ENCODE measurements at regions of chr1 and their contacts with region 1.

Region 1: DNA sequence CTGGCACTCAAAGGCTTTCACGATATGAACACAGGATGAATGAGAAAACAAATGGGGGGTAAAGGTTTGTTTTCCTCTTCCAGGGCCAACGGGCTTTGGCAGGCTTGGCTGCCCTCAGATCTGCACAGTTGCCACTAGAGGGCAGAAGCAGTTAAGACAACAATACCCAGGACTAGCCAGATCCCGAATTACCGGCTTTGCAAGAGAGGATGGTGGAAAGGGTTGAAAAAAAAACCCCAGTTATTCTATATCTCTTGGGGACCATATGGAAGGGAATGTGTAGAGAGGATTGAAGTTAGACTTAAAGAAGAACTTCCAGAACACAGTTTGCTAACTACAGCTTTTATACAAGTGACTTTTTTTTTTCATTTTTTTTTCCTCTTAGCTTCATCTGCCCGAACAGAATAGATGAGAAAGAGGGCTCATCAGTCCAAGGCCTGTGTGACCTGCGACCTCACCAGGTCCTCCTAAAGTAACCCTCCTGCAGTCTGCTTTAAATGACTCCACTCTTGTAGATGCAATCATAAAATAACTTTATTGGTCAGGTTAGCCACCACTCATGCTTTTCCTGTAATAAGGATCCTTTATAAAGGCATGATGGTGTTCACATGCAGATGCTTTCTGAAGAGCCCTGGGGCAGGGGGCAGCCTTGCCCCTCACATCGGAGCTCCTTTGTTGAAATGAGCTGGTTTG is 10.7 kb downstream of the FMOD start:
- DNase-seq: peak; percentile 71
- ATAC-seq: peak; percentile 81
- H3K4me3 Mint-ChIP-seq: no peak overlapping the region
- H3K27ac Mint-ChIP-seq: no peak overlapping the region
- H3K4me1 Mint-ChIP-seq: peaks cover 17% of the 10 kb centered on the region
- H3K27me3 Mint-ChIP-seq: peaks cover 11% of the 10 kb centered on the region
- CTCF ChIP-seq: peak; percentile 91

Region 2: GRCh38 chr1:203239526-203240305 is 100.5 kb before region 1 on chr1:
- CTCF ChIA-PET with region 1: no interaction called
- POLR2A ChIA-PET with region 1: no interaction called
- intact Hi-C with region 1: no loop called
- DNase-seq: no peak
- ATAC-seq: no peak
- H3K4me3 Mint-ChIP-seq: no peak overlapping the region
- H3K27ac Mint-ChIP-seq: no peak overlapping the region
- H3K4me1 Mint-ChIP-seq: no peaks in the 10 kb centered on the region
- H3K27me3 Mint-ChIP-seq: peaks cover 20% of the 10 kb centered on the region
- CTCF ChIP-seq: no peak

Region 3: GRCh38 chr1:203290261-203291089 is 49.8 kb before region 1 on chr1:
- CTCF ChIA-PET with region 1: interaction called, 15 read pairs
- POLR2A ChIA-PET with region 1: no interaction called
- intact Hi-C with region 1: no loop called
- DNase-seq: peak; percentile 99
- ATAC-seq: peak; percentile 55
- H3K4me3 Mint-ChIP-seq: peak overlapping the region; percentile 83
- H3K27ac Mint-ChIP-seq: peak overlapping the region; percentile 100
- H3K4me1 Mint-ChIP-seq: peaks cover 79% of the 10 kb centered on the region
- H3K27me3 Mint-ChIP-seq: peaks cover 1% of the 10 kb centered on the region
- CTCF ChIP-seq: no peak

Region 4: DNA sequence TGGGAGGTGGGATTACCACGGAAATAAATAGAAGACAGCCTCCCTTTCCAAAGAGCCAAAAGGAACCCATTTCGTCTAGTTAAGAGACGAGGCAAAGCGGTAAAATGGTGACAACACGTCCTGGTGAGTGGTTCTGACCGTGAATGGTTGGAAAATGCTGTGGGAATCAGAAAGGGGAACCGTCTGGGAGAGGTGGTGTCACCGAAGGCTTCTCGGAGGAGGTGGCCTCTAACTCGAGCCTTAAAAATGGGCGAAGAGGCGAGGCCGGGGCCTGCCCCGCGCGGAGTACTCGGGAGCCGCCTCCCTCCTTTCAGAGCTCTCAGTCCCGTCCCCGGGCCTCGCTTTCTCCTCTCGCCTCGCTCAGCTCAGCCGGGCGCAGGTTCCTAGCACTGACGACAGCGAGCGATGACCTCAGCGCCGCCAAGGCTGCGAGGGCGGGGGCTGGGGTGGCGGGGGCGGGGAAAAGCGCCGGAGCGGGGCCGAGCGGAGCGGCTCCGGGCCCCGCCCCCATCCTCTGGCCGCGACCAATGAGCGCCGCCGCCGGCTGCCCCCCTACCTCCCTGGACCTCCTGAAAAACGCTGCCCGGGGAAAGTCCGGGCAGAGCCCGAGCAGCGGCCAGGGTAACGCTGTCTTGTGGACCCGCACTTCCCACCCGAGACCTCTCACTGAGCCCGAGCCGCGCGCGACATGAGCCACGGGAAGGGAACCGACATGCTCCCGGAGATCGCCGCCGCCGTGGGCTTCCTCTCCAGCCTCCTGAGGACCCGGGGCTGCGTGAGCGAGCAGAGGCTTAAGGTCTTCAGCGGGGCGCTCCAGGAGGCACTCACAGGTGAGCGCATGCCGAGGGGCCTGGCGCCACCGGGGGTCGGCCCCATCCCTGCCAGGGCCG is 35.1 kb before region 1 on chr1 and contains the start of gene BTG2:
- CTCF ChIA-PET with region 1: interaction called, 148 read pairs
- POLR2A ChIA-PET with region 1: interaction called, 28 read pairs
- intact Hi-C with region 1: no loop called
- DNase-seq: peak; percentile 93
- ATAC-seq: peak; percentile 85
- H3K4me3 Mint-ChIP-seq: peak within 1 kb of the TSS; percentile 99
- H3K27ac Mint-ChIP-seq: peak within 1 kb of the TSS; percentile 98
- H3K4me1 Mint-ChIP-seq: peaks cover 55% of the 10 kb centered on the region
- H3K27me3 Mint-ChIP-seq: no peaks in the 10 kb centered on the region
- CTCF ChIP-seq: no peak
- total RNA-seq, gene BTG2: 115 TPM

Region 5: DNA sequence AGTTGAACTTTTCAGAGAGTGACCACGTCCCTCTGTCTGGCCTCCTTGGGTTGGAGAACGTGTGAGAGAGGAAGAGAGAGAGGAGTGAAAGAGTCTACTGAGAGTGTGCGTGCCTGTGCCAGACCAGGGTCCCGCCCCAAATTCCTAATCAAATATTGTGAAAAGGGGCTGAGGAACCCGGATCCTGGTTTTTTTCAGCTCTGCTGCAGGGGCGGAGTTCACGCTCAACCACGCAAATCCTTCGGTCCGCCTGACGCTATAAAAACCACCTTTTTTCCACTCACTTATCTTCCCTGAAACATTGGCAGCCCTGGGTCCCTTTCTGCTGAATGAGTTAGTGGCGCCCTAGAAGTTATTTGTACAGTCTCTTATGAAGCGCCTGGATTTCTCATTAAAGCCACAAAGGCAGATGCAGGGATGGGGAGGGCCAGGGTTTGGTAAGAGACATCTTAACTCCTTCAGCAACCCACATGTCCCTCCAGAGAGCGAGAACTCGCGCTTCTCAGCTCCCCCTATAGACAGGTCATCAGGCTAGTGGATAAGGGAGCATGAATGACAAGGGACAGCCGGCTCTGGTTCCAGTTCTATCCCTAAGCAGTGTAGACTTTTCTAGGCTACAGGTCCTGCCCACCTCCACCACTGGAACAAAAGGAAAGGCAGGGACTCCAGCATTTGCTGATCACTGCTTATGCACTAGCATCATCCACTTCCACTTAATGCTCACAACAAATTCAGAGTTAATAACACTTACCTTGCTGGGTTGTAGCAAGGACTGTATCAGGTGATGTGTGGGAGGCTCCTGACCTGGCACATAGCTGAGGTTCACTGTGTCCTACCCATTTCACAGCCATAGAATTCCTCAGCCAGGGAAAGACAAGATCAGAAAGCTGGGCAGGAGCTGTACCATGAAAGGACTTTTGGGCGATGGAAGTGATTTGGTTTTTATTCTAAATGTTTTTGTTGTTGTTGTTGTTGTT is 11.1 kb after region 1 on chr1 and contains the start of gene FMOD:
- CTCF ChIA-PET with region 1: interaction called, 161 read pairs
- POLR2A ChIA-PET with region 1: no interaction called
- intact Hi-C with region 1: no loop called
- DNase-seq: peak; percentile 32
- ATAC-seq: peak; percentile 72
- H3K4me3 Mint-ChIP-seq: peak within 1 kb of the TSS; percentile 29
- H3K27ac Mint-ChIP-seq: peak within 1 kb of the TSS; percentile 50
- H3K4me1 Mint-ChIP-seq: peaks cover 10% of the 10 kb centered on the region
- H3K27me3 Mint-ChIP-seq: peaks cover 18% of the 10 kb centered on the region
- CTCF ChIP-seq: no peak
- total RNA-seq, gene FMOD: 1.4 to 2.4 TPM

Region 6: DNA sequence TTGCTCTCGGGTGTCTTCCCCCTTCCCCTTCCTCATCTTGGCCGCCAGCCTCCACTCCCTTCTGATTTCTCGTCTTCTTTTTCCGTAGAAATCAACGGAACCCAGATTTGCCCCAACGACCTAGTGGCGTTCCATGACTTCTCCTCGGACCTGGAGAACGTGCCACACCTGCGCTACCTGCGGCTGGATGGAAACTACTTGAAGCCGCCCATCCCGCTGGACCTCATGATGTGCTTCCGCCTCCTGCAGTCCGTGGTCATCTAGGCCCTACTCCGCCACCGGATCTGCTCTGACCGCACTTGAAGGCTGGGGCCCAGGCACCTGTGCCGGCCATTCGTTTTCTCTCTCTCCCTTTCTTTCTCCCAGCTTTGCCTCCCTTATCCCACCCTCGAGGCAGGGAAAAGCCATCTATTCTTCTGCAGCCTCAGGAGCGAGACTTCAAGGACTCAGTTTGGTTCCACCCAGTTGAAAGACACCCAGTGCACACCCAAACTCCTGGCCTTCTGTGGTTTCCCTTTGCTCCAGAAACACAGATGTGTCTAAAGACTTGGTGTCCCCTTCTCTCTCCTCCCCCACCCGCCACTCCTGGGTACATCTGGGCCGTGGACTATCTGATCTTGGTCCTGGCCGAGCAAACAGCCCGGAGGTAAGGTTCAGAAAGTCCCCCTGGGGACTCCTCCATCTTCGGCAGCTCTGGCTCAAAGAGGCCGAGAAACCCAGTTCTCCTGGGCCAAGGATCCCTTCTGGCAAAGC is 146.5 kb after region 1 on chr1:
- CTCF ChIA-PET with region 1: interaction called, 125 read pairs
- POLR2A ChIA-PET with region 1: interaction called, 3 read pairs
- intact Hi-C with region 1: loop called (anchors 2 kb)
- DNase-seq: no peak
- ATAC-seq: no peak
- H3K4me3 Mint-ChIP-seq: peak overlapping the region; percentile 58
- H3K27ac Mint-ChIP-seq: no peak overlapping the region
- H3K4me1 Mint-ChIP-seq: peaks cover 6% of the 10 kb centered on the region
- H3K27me3 Mint-ChIP-seq: no peaks in the 10 kb centered on the region
- CTCF ChIP-seq: no peak

Region 7: DNA sequence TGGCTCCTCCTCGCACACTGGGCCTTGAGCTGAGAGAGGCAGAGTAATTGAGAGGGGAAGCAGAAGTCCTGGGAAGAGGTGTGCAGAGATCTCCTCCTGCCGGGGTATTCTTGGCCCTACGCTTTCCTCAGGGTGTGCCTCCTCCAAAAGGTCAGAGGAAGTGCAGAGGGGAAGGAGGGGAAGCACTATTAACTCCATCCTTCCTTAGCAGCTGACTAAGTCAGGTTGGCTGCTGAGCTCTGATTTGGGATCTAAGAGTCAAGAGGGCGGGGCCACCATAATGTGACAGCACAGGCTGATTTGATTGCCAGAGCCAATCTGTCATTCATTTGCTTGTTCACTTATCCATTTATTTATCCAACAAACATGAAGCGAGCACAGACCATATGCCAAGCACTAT is 298.7 kb after region 1 on chr1:
- CTCF ChIA-PET with region 1: no interaction called
- POLR2A ChIA-PET with region 1: no interaction called
- intact Hi-C with region 1: no loop called
- DNase-seq: no peak
- ATAC-seq: peak; percentile 47
- H3K4me3 Mint-ChIP-seq: no peak overlapping the region
- H3K27ac Mint-ChIP-seq: no peak overlapping the region
- H3K4me1 Mint-ChIP-seq: peaks cover 42% of the 10 kb centered on the region
- H3K27me3 Mint-ChIP-seq: no peaks in the 10 kb centered on the region
- CTCF ChIP-seq: no peak

Measured in activated CD8-positive, alpha-beta T cell treated with anti-CD3 and anti-CD28 coated beads for 36 hours (primary cell).